ENCODE measurements at regions of chr6 and their contacts with region 1.

Region 1: DNA sequence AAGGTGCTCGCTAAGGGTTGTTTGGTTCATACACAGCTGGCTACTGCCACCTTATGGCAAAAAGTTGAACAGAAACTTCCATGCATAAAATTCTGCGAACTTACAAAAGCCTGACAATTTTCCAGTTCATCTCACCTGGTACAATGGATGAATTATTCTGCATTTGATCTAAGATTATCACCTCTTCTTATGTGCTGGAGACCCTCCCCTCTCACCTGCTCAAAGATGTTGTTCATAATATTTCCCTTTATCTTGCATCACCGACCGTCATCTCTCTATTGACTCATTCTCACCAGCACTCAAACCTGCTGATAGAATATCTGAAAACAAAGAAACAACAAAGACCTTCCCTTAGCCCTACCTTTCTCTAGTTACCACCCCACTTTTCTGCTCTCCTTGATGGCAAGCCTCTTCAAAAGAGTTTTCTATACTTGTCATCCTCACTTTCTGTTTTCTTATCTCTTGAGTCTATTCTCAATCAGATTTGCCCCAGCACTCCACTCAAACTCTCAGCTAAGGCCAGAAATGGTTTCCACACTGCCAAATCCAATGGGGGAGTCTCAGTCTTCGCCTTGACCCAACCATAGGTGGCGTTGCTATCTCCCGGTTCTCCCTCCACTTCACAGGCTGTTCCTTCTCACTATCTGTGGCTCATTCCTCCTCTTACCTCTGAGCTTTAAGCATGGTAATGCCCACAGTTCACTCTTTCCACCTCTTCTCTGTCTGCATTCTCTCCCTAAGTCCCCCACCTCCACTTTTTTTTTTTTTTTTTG is 25.8 kb downstream of the SNRNP48 start:
- DNase-seq: peak in 1 of 2 donors; percentile 71
- ATAC-seq: peak in 1 of 3 donors; percentile 57
- H3K4me3 ChIP-seq: no peak overlapping the region
- H3K4me3 Mint-ChIP-seq: no peak overlapping the region
- H3K27ac ChIP-seq: no peak overlapping the region
- H3K27ac Mint-ChIP-seq: no peak overlapping the region
- H3K4me1 ChIP-seq: peaks cover 6% of the 10 kb centered on the region
- H3K4me1 Mint-ChIP-seq: peaks cover 17 to 19% of the 10 kb centered on the region in 2 donors
- H3K27me3 ChIP-seq: peaks cover 2% of the 10 kb centered on the region
- H3K27me3 Mint-ChIP-seq: no peaks in the 10 kb centered on the region
- CTCF ChIP-seq: peak; percentile 76

Region 2: DNA sequence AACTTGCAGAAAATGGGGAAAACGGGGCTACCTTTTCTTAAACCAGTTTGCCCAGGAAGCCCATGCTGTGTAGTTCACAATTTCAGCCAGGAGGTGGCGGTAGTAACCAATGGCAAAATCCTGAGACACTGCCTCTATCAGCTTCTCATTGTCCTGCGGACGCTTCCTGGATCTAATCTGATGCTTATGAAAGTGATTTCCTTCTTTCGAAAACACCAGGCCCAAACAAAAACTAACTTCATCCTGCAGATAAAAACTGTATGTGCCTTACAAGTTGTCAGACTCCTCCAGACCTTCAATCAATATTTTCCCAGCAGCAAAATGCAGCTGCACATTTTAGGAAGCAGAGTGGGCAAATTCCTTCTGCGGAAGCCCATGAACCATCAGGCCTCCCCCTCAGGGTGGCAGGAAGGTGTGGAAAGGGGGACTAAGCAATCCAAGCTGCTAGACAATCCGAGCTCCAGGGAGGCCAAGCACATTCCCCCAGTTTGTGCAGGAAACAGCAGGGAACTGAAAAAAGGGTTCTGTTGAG is 938.8 kb before region 1 on chr6:
- intact Hi-C with region 1: loop called (anchors 2 kb)
- DNase-seq: peak; percentile 71 to 89
- ATAC-seq: peak; percentile 90 to 96 (median 91)
- H3K4me3 ChIP-seq: no peak overlapping the region
- H3K4me3 Mint-ChIP-seq: no peak overlapping the region
- H3K27ac ChIP-seq: no peak overlapping the region
- H3K27ac Mint-ChIP-seq: no peak overlapping the region
- H3K4me1 ChIP-seq: peaks cover 4% of the 10 kb centered on the region
- H3K4me1 Mint-ChIP-seq: peaks cover 6 to 7% of the 10 kb centered on the region in 2 donors
- H3K27me3 ChIP-seq: no peaks in the 10 kb centered on the region
- H3K27me3 Mint-ChIP-seq: no peaks in the 10 kb centered on the region
- CTCF ChIP-seq: peak; percentile 90